ENCODE measurements at regions of chr19 and their contacts with region 1.

Region 1: GRCh38 chr19:57682226-57682766 is 519 bp downstream of the ZNF551 start:
- DNase-seq: no peak
- ATAC-seq: no peak
- H3K4me3 ChIP-seq: peak overlapping the region; percentile 91 to 94
- H3K4me3 Mint-ChIP-seq: peak overlapping the region; percentile 98
- H3K27ac ChIP-seq: peak overlapping the region; percentile 69 to 71
- H3K27ac Mint-ChIP-seq: peak overlapping the region; percentile 97
- H3K4me1 ChIP-seq: peaks cover 19% of the 10 kb centered on the region
- H3K4me1 Mint-ChIP-seq: peaks cover 36% of the 10 kb centered on the region
- H3K27me3 ChIP-seq: peaks cover 0 to 2% of the 10 kb centered on the region in 2 experiments
- H3K27me3 Mint-ChIP-seq: peaks cover 7% of the 10 kb centered on the region
- CTCF ChIP-seq: no peak

Region 2: DNA sequence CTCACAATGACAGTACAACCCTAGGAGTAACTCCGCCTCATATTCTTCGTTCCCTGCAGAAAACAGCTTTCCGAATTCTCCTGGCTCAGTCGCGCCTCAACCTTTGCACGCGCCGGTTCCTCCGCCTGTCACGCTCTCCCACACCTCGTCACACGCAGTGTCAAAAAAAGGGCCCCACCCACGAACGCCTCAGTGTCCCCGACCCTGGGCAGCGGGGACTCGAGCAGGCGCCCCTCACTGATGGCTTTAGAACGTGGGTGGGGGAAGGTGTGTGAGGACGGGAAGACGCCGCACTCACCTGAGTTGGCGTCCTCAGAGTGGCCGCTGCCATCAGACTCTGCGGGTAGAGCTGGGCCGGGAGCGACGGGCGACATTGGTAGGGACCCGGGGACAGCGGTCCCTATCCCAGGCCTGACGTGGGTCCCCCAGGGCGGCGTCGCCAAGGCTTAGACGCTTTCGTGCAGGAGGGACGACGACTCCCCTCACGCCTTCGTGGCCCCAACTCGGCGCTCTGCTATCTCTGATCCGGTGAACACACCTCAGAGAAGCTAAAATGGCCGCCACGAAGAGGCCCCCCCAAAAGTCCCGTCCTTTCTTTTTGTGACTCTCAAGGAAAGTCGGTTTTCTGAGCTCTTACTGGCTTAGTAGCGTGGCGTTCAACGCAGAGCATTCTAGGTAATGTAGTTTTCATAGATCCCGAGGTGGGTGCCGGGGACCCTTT is 26.5 kb after region 1 on chr19 and contains the start of gene ZNF154:
- CTCF ChIA-PET with region 1: no interaction called
- POLR2A ChIA-PET with region 1: interaction called, 6 read pairs
- intact Hi-C with region 1: loop called in 1 of 2 experiments (anchors 1 kb)
- DNase-seq: peak; percentile 11 to 74 (median 48)
- ATAC-seq: peak; percentile 91
- H3K4me3 ChIP-seq: peak within 1 kb of the TSS; percentile 55 to 58
- H3K4me3 Mint-ChIP-seq: peak within 1 kb of the TSS; percentile 85
- H3K27ac ChIP-seq: peak within 1 kb of the TSS; percentile 60 to 79
- H3K27ac Mint-ChIP-seq: peak within 1 kb of the TSS; percentile 93
- H3K4me1 ChIP-seq: no peaks in the 10 kb centered on the region
- H3K4me1 Mint-ChIP-seq: peaks cover 37% of the 10 kb centered on the region
- H3K27me3 ChIP-seq: no peaks in the 10 kb centered on the region
- H3K27me3 Mint-ChIP-seq: peaks cover 4% of the 10 kb centered on the region
- CTCF ChIP-seq: no peak
- total RNA-seq, gene ZNF154: 15.3 to 15.7 TPM

Region 3: GRCh38 chr19:57719901-57720519 is 37.7 kb after region 1 on chr19:
- CTCF ChIA-PET with region 1: no interaction called
- POLR2A ChIA-PET with region 1: no interaction called
- intact Hi-C with region 1: no loop called
- DNase-seq: peak in 1 of 9 experiments; percentile 23
- ATAC-seq: no peak
- H3K4me3 ChIP-seq: peak overlapping the region in 1 of 2 experiments; percentile 8
- H3K4me3 Mint-ChIP-seq: no peak overlapping the region
- H3K27ac ChIP-seq: no peak overlapping the region
- H3K27ac Mint-ChIP-seq: no peak overlapping the region
- H3K4me1 ChIP-seq: no peaks in the 10 kb centered on the region
- H3K4me1 Mint-ChIP-seq: peaks cover 14% of the 10 kb centered on the region
- H3K27me3 ChIP-seq: no peaks in the 10 kb centered on the region
- H3K27me3 Mint-ChIP-seq: no peaks in the 10 kb centered on the region
- CTCF ChIP-seq: no peak

Region 4: DNA sequence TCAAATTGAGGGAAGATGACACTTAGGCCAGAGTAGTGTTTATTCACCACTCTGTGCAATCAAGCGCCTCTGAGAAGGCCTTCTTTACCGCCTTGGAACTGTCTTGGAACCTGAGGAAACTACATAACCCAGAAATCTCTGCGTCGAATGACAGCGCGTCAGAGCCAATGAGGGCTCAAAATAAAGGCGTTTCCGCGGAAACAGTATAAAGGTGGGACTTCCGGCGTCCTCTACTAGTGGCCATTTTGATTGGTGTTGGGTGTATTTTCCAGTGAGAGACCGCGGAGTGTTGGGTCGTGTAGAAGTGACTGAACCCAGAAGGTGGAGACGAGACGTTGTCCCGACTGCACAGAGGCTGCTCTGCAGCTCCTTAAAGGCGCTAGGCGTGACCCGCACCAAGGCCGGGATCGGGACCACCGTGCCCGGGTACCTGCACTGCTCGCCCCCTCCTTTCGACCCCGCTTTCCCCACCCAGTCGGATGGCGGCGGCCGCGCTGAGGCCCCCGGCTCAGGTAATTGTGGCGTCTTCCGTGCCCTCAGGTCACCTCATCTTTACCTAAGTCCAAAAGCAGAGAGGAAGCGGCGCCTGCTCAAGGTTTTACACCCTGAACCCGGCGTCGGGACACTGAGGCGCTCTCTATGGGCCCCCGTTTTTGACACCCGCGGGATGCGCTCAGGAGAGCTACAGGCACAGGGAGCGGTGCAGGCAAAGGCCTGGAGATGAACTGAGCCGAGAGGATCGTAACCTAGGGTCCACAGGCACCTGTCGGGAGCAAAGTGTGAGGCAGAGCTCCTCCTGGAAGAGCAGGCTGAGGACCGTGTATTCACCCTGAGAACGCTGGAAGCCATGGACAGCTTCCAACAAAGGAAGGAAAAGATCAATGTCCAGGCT is 64.5 kb after region 1 on chr19 and contains the start of gene ZNF776:
- CTCF ChIA-PET with region 1: no interaction called
- POLR2A ChIA-PET with region 1: no interaction called
- intact Hi-C with region 1: loop called (anchors 1 to 2 kb)
- DNase-seq: peak; percentile 63 to 93 (median 84)
- ATAC-seq: peak; percentile 96
- H3K4me3 ChIP-seq: peak within 1 kb of the TSS; percentile 75 to 84
- H3K4me3 Mint-ChIP-seq: peak within 1 kb of the TSS; percentile 95
- H3K27ac ChIP-seq: peak within 1 kb of the TSS; percentile 71 to 80
- H3K27ac Mint-ChIP-seq: peak within 1 kb of the TSS; percentile 98
- H3K4me1 ChIP-seq: peaks cover 16% of the 10 kb centered on the region
- H3K4me1 Mint-ChIP-seq: peaks cover 41% of the 10 kb centered on the region
- H3K27me3 ChIP-seq: no peaks in the 10 kb centered on the region
- H3K27me3 Mint-ChIP-seq: no peaks in the 10 kb centered on the region
- CTCF ChIP-seq: no peak
- total RNA-seq, gene ZNF776: 22.3 to 32.3 TPM

Region 5: GRCh38 chr19:57769345-57770131 is 87.2 kb after region 1 on chr19 and contains the start of gene ZNF586:
- CTCF ChIA-PET with region 1: no interaction called
- POLR2A ChIA-PET with region 1: no interaction called
- intact Hi-C with region 1: loop called (anchors 1 kb)
- DNase-seq: peak; percentile 64 to 94 (median 86)
- ATAC-seq: peak; percentile 99
- H3K4me3 ChIP-seq: peak within 1 kb of the TSS; percentile 73 to 90
- H3K4me3 Mint-ChIP-seq: peak within 1 kb of the TSS; percentile 94
- H3K27ac ChIP-seq: peak within 1 kb of the TSS; percentile 61 to 86
- H3K27ac Mint-ChIP-seq: peak within 1 kb of the TSS; percentile 97
- H3K4me1 ChIP-seq: peaks cover 17% of the 10 kb centered on the region
- H3K4me1 Mint-ChIP-seq: peaks cover 35% of the 10 kb centered on the region
- H3K27me3 ChIP-seq: no peaks in the 10 kb centered on the region
- H3K27me3 Mint-ChIP-seq: no peaks in the 10 kb centered on the region
- CTCF ChIP-seq: no peak
- total RNA-seq, gene ZNF586: 54.0 to 57.6 TPM

Measured in CD8-positive, alpha-beta T cell (primary cell).